ENCODE measurements at regions of chr3 and their contacts with region 1.

Region 1: GRCh38 chr3:64238971-64239667 is 13.9 kb upstream of the PRICKLE2 start:
- DNase-seq: peak; percentile 48 to 74
- H3K4me3 ChIP-seq: no peak overlapping the region
- H3K27ac ChIP-seq: no peak overlapping the region
- H3K4me1 ChIP-seq: peaks cover 11% of the 10 kb centered on the region; the same call in 1 of the 2 replicates
- H3K27me3 ChIP-seq: no peaks in the 10 kb centered on the region
- CTCF ChIP-seq: no peak

Region 2: GRCh38 chr3:63937661-63938651 is 301.2 kb before region 1 on chr3:
- CTCF ChIA-PET with region 1: no interaction called
- POLR2A ChIA-PET with region 1: no interaction called
- intact Hi-C with region 1: no loop called
- DNase-seq: peak; percentile 43 to 86
- H3K4me3 ChIP-seq: peak overlapping the region; percentile 29; the same call in 1 of the 2 replicates
- H3K27ac ChIP-seq: peak overlapping the region; percentile 60
- H3K4me1 ChIP-seq: peaks cover 41% of the 10 kb centered on the region
- H3K27me3 ChIP-seq: no peaks in the 10 kb centered on the region
- CTCF ChIP-seq: no peak

Region 3: GRCh38 chr3:64187065-64187959 is 51.8 kb before region 1 on chr3:
- CTCF ChIA-PET with region 1: no interaction called
- POLR2A ChIA-PET with region 1: no interaction called
- intact Hi-C with region 1: loop called (anchors 2 kb)
- DNase-seq: peak; percentile 46 to 68
- H3K4me3 ChIP-seq: no peak overlapping the region
- H3K27ac ChIP-seq: peak overlapping the region; percentile 29; the same call in 1 of the 2 replicates
- H3K4me1 ChIP-seq: peaks cover 50% of the 10 kb centered on the region
- H3K27me3 ChIP-seq: no peaks in the 10 kb centered on the region
- CTCF ChIP-seq: no peak

Region 4: DNA sequence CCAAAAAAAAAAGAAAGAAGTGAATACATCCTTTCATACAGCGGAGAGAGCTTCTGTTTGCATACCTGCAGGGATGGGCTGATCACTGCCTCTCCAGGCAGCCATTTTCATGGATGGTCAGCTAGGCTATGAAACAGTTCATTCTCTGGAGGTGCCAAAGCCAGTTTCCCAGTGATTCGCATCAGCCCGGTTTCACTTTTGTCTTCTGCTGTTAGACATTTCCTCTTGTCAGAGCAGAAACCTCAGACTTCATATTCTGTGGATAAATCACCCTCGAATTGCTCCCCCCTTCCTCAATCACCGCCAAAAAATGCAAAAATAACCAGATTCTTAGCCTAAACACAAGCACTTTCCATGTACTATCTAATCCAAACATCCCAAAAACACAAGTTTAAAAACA is 223.1 kb after region 1 on chr3:
- CTCF ChIA-PET with region 1: no interaction called
- POLR2A ChIA-PET with region 1: no interaction called
- intact Hi-C with region 1: no loop called
- DNase-seq: no peak
- H3K4me3 ChIP-seq: no peak overlapping the region
- H3K27ac ChIP-seq: no peak overlapping the region
- H3K4me1 ChIP-seq: no peaks in the 10 kb centered on the region
- H3K27me3 ChIP-seq: no peaks in the 10 kb centered on the region
- CTCF ChIP-seq: no peak